Activated CD4-positive, alpha-beta memory T cell treated with anti-CD3 and anti-CD28 coated beads, Interleukin-2, amount 10 ng/mL, durations not matched to agents 7 days and 5 days (primary cell): ENCODE measurements at regions of chr2 and their contacts with region 1.

Region 1: GRCh38 chr2:20781656-20782265 is 41.1 kb downstream of the LDAH start:
- DNase-seq: peak; percentile 35
- H3K4me3 Mint-ChIP-seq: no peak overlapping the region
- H3K27ac Mint-ChIP-seq: no peak overlapping the region
- H3K4me1 Mint-ChIP-seq: peaks cover 2% of the 10 kb centered on the region
- H3K27me3 Mint-ChIP-seq: no peaks in the 10 kb centered on the region

Region 2: GRCh38 chr2:20717641-20718040 is 64.1 kb before region 1 on chr2:
- CTCF ChIA-PET with region 1: no interaction called
- POLR2A ChIA-PET with region 1: no interaction called
- DNase-seq: no peak
- H3K4me3 Mint-ChIP-seq: no peak overlapping the region
- H3K27ac Mint-ChIP-seq: no peak overlapping the region
- H3K4me1 Mint-ChIP-seq: no peaks in the 10 kb centered on the region
- H3K27me3 Mint-ChIP-seq: no peaks in the 10 kb centered on the region

Region 3: GRCh38 chr2:20796374-20796791 is 14.6 kb after region 1 on chr2:
- CTCF ChIA-PET with region 1: interaction called, 17 read pairs
- POLR2A ChIA-PET with region 1: no interaction called
- DNase-seq: no peak
- H3K4me3 Mint-ChIP-seq: no peak overlapping the region
- H3K27ac Mint-ChIP-seq: no peak overlapping the region
- H3K4me1 Mint-ChIP-seq: peaks cover 10% of the 10 kb centered on the region
- H3K27me3 Mint-ChIP-seq: no peaks in the 10 kb centered on the region

Region 4: GRCh38 chr2:20822535-20823490 is 41.1 kb after region 1 on chr2 and contains the start of gene LDAH:
- CTCF ChIA-PET with region 1: interaction called, 13 read pairs
- POLR2A ChIA-PET with region 1: no interaction called
- DNase-seq: peak; percentile 85
- H3K4me3 Mint-ChIP-seq: peak within 1 kb of the TSS; percentile 97
- H3K27ac Mint-ChIP-seq: peak within 1 kb of the TSS; percentile 97
- H3K4me1 Mint-ChIP-seq: peaks cover 29% of the 10 kb centered on the region
- H3K27me3 Mint-ChIP-seq: no peaks in the 10 kb centered on the region
- total RNA-seq, gene LDAH: 26.4 to 28.1 TPM

Region 5: DNA sequence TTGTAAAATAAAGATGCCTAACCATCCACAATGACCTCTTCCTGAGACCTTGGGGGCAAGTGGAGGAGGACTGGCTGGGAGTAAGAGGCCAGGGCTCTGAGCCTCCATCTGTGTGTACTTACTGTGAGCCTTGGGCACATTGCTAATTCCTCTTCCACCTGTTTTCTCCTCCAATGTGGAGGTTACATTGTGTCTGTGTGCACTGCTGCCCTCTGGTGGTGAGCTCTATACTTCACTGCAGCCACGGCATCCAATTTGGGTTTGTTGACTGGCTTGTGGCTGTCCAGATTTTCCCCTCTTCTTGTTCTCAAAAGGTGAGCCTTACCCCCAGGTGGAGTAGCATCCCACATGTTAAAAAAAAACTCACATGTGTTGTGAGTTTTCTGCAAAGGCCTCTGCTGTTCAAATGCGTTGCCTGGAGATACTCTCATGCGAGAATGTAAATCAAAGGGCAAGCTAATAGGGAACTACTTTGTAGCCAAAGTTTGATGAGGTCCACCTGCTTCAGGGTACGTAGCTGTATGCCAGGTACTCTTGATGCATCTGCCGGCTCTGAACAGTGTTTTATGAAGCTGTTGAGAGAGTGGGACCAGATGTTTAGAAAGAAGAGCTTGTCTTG is 181.3 kb after region 1 on chr2:
- CTCF ChIA-PET with region 1: interaction called, 77 read pairs
- POLR2A ChIA-PET with region 1: no interaction called
- DNase-seq: peak; percentile 70
- H3K4me3 Mint-ChIP-seq: no peak overlapping the region
- H3K27ac Mint-ChIP-seq: no peak overlapping the region
- H3K4me1 Mint-ChIP-seq: no peaks in the 10 kb centered on the region
- H3K27me3 Mint-ChIP-seq: peaks cover 17% of the 10 kb centered on the region